ENCODE measurements at regions of chrX and their contacts with region 1.

Region 1: GRCh38 chrX:20442597-20442996 is 175.9 kb upstream of the RPS6KA3 start:
- ATAC-seq: peak in 5 of 8 experiments; percentile 39 to 80 (median 71)
- H3K4me3 ChIP-seq: no peak overlapping the region
- H3K27ac ChIP-seq: no peak overlapping the region
- H3K4me1 ChIP-seq: no peaks in the 10 kb centered on the region

Region 2: DNA sequence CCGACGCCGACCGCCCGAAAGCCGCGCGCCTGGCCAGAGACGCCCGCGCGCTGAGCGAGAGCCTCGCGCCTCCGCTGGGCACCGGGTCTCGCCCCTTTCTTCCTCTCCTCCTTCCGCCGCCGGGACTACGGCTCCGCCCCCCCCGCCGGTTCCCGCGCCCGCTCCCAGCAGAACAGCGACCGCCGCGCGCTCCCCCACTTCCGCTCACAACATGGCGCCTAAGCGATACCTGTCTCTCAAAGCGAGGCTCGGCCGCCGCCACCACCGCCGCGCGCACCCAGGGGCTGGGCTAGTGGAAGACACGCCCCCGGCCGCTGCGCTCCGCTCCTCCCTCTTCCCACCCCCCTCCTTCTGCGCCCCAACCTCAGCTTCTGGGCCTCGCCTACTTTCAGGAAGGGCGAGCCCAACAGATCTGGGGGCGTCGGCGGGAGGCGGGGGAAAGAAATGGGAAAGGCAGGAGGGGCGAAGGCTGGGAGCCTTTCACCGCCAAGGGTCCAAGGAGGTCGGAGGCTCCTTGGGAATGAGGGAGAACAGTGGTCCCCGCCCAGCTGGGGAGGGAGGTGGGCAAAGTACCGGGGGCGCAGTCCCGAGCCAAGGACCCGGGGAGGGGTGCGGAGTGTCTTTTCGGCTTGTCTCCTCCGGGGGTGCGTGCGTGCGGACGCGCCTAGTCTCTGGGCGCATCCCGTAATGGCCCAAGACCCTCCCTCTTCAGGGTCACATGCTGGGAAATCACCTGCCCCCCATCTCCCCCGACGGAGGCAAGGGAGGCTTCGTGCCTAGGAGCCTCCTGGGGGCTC is 175.6 kb before region 1 on chrX and contains the start of gene RPS6KA3:
- in situ Hi-C with region 1: loop called in 3 of 9 experiments (anchors 25 kb)
- ATAC-seq: peak; percentile 80 to 92 (median 87)
- H3K4me3 ChIP-seq: peak within 1 kb of the TSS; percentile 50 to 81 (median 64)
- H3K27ac ChIP-seq: peak within 1 kb of the TSS; percentile 81 to 83
- H3K4me1 ChIP-seq: peaks cover 6 to 12% of the 10 kb centered on the region in 2 donors
- total RNA-seq, gene RPS6KA3: 9.1 to 38.7 (median 18.2) TPM

Region 3: DNA sequence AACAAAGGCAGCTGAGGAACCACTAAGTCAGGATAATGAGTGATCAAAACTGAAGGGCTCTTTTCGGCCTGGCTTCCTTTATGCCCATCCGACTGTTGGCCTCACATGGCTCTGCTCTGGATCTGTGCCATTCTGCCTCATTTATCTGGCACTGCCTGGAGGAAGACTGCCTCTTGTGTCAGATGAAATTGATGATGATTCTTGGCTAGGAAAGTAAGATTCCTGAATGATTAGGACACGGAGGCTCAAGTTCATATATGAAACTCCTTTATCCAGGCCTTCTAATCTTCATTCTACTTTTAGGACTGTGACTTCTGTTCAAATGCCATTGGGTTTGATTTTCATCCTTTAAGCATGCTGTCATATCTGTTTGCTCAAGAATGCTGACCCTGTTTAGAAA is 299.5 kb after region 1 on chrX:
- in situ Hi-C with region 1: no loop called
- ATAC-seq: peak in 1 of 8 experiments; percentile 57
- H3K4me3 ChIP-seq: no peak overlapping the region
- H3K27ac ChIP-seq: no peak overlapping the region
- H3K4me1 ChIP-seq: no peaks in the 10 kb centered on the region

Region 4: GRCh38 chrX:20829665-20830491 is 387.3 kb after region 1 on chrX:
- in situ Hi-C with region 1: no loop called
- ATAC-seq: peak in 5 of 8 experiments; percentile 83 to 97 (median 94)
- H3K4me3 ChIP-seq: no peak overlapping the region
- H3K27ac ChIP-seq: no peak overlapping the region
- H3K4me1 ChIP-seq: no peaks in the 10 kb centered on the region

Measured in motor neuron (in vitro differentiated cells).